ENCODE measurements at regions of chr4 and their contacts with region 1.

Region 1: GRCh38 chr4:15976456-15977447 is 13.8 kb upstream of the FGFBP2 start:
- DNase-seq: no peak
- H3K4me3 ChIP-seq: no peak overlapping the region
- H3K27ac ChIP-seq: no peak overlapping the region
- H3K4me1 ChIP-seq: no peaks in the 10 kb centered on the region
- H3K27me3 ChIP-seq: no peaks in the 10 kb centered on the region
- CTCF ChIP-seq: peak; percentile 19 to 26 (median 22); a peak in 3 of 4 replicates
- EP300 ChIP-seq: no peak
- POLR2A ChIP-seq: no peak
- RAD21 ChIP-seq: peak in 1 of 2 experiments; percentile 41; a peak in 2 of 4 replicates

Region 2: GRCh38 chr4:15182600-15183220 is 794.0 kb before region 1 on chr4:
- CTCF ChIA-PET with region 1: no interaction called
- POLR2A ChIA-PET with region 1: no interaction called
- DNase-seq: no peak
- H3K4me3 ChIP-seq: no peak overlapping the region
- H3K27ac ChIP-seq: no peak overlapping the region
- H3K4me1 ChIP-seq: peaks cover 0 to 3% (median 0%) of the 10 kb centered on the region in 4 experiments; a peak in 1 of 7 replicates
- H3K27me3 ChIP-seq: no peaks in the 10 kb centered on the region
- CTCF ChIP-seq: no peak
- EP300 ChIP-seq: no peak
- POLR2A ChIP-seq: no peak
- RAD21 ChIP-seq: no peak

Region 3: GRCh38 chr4:15913631-15913970 is 63.2 kb before region 1 on chr4:
- CTCF ChIA-PET with region 1: no interaction called
- POLR2A ChIA-PET with region 1: no interaction called
- DNase-seq: no peak
- H3K4me3 ChIP-seq: no peak overlapping the region
- H3K27ac ChIP-seq: no peak overlapping the region
- H3K4me1 ChIP-seq: no peaks in the 10 kb centered on the region
- H3K27me3 ChIP-seq: no peaks in the 10 kb centered on the region; a peak in 1 of 7 replicates
- CTCF ChIP-seq: no peak
- EP300 ChIP-seq: no peak
- POLR2A ChIP-seq: no peak
- RAD21 ChIP-seq: no peak

Region 4: GRCh38 chr4:15963001-15963451 is 13.7 kb before region 1 on chr4 and contains the start of gene FGFBP2:
- CTCF ChIA-PET with region 1: interaction called, 36 read pairs
- POLR2A ChIA-PET with region 1: interaction called, 4 read pairs
- DNase-seq: peak in 1 of 2 experiments; percentile 78
- H3K4me3 ChIP-seq: no peak within 1 kb of the TSS
- H3K27ac ChIP-seq: no peak within 1 kb of the TSS
- H3K4me1 ChIP-seq: peaks cover 0 to 2% (median under 1%) of the 10 kb centered on the region in 4 experiments; a peak in 4 of 7 replicates
- H3K27me3 ChIP-seq: no peaks in the 10 kb centered on the region
- CTCF ChIP-seq: peak; percentile 74 to 89 (median 82)
- EP300 ChIP-seq: no peak
- POLR2A ChIP-seq: no peak
- RAD21 ChIP-seq: peak; percentile 81 to 83
- total RNA-seq, gene FGFBP2: not detected in 2 replicates

Region 5: GRCh38 chr4:16001484-16001858 is 24.7 kb after region 1 on chr4:
- CTCF ChIA-PET with region 1: interaction called, 10 read pairs
- POLR2A ChIA-PET with region 1: no interaction called
- DNase-seq: peak; percentile 61 to 63
- H3K4me3 ChIP-seq: no peak overlapping the region
- H3K27ac ChIP-seq: no peak overlapping the region
- H3K4me1 ChIP-seq: no peaks in the 10 kb centered on the region; a peak in 1 of 7 replicates
- H3K27me3 ChIP-seq: no peaks in the 10 kb centered on the region
- CTCF ChIP-seq: peak; percentile 78 to 98 (median 82)
- EP300 ChIP-seq: no peak
- POLR2A ChIP-seq: 0 out of 3 replicates have a peak, but pooled peaks of 1 of the 2 experiments have one; percentile 26
- RAD21 ChIP-seq: peak; percentile 84 to 89